A673 (cell line): ENCODE measurements at regions of chr20 and their contacts with region 1.

Region 1: GRCh38 chr20:32902456-32903420 is 44.0 kb downstream of the EFCAB8 start:
- DNase-seq: peak; percentile 61
- H3K4me3 ChIP-seq: no peak overlapping the region
- H3K27ac ChIP-seq: no peak overlapping the region
- H3K4me1 ChIP-seq: no peaks in the 10 kb centered on the region
- H3K27me3 ChIP-seq: no peaks in the 10 kb centered on the region
- CTCF ChIP-seq: peak; percentile 90

Region 2: DNA sequence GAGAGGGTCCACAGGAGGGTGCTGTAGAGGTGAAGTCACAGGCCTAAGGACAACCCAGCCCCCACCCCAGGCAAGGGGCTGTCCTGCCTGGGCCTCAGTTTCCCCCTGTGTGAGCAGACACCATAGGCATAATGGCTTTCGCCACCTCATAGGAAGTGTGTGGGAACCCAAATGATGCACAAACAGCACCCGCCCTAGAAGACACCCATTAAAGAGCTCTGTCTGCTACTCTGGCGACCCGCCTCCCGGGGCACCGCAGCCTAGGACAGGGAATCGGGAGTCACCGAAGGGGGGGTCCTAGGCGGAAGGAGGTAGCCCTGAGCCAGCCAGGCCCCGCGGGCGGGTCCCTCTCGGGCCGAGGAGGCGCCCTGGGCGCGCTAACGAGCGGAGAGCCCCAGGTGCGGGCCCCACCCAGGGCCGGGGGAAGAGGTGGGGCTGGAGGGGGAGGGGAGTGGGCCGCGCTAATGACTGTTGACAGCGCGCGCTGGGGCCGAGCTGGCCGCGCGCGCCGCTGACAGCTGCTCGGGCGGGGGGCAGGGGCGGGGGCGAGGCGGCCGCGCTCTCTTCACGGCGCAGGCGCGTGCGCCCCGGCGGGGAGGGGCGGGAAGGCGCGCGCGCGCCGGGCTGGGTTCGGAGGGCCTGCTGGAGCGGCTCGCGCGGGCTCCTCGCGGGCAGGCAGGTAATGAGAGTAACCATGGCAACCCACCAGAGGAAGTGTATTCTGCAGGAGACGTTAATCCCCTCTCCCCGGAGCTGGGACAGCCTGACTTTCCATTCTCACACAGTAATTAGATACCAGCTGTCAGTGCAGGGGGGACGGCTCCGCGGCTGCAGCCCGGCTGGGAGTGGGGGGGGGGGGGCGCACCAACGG is 366.6 kb before region 1 on chr20:
- CTCF ChIA-PET with region 1: no interaction called
- POLR2A ChIA-PET with region 1: no interaction called
- intact Hi-C with region 1: no loop called
- DNase-seq: peak; percentile 84
- H3K4me3 ChIP-seq: peak overlapping the region; percentile 39
- H3K27ac ChIP-seq: no peak overlapping the region
- H3K4me1 ChIP-seq: peaks cover 11% of the 10 kb centered on the region
- H3K27me3 ChIP-seq: no peaks in the 10 kb centered on the region
- CTCF ChIP-seq: no peak

Region 3: DNA sequence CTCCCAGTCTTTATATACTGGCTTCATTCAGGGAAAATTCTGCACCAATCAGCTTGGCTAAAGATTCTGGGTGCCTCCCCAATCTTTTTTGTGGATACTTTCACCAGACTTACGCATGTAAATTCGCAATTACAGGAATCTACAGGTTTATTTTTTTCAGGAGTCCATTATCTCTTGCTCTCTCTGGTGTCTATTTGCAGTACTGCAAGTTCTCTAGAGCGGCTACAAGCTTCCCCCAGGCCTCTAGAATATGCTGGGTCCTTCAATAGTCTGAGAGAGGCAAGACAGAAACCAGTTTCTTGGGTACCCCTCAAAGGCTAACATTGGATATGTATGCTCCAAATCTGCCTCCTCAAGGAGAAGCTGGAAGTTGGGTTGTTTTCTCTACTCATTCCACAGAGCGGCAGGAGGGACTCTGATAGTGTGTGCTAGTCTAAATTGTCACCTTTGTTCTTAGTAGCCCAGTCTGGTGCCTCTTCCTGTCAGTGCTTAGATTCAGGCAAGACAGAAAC is 43.0 kb after region 1 on chr20:
- CTCF ChIA-PET with region 1: interaction called, 6 read pairs
- POLR2A ChIA-PET with region 1: no interaction called
- intact Hi-C with region 1: loop called (anchors 1 kb)
- DNase-seq: peak; percentile 52
- H3K4me3 ChIP-seq: no peak overlapping the region
- H3K27ac ChIP-seq: no peak overlapping the region
- H3K4me1 ChIP-seq: no peaks in the 10 kb centered on the region
- H3K27me3 ChIP-seq: peaks cover 36% of the 10 kb centered on the region
- CTCF ChIP-seq: peak; percentile 59

Region 4: DNA sequence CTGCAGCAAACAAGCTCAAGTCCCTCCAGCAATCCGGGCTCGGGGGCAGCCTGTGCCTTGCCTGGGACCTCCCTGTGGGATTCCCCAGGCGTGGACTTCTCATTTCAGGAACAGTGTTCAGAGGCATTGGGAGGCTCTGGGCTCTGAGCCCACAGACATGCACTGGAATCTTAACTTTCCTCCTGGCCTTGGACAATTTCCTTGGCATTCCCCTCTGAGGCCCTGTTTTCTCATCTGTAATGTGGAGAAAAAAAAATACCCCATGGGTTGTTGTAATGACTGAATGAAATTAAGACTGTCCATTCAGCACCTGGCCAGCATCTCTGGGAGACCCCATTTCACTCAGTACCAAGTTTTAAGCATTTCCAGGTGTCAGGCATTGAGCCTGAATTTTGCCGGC is 194.3 kb after region 1 on chr20:
- CTCF ChIA-PET with region 1: no interaction called
- POLR2A ChIA-PET with region 1: no interaction called
- intact Hi-C with region 1: loop called (anchors 2 kb)
- DNase-seq: no peak
- H3K4me3 ChIP-seq: no peak overlapping the region
- H3K27ac ChIP-seq: no peak overlapping the region
- H3K4me1 ChIP-seq: no peaks in the 10 kb centered on the region
- H3K27me3 ChIP-seq: peaks cover 9% of the 10 kb centered on the region
- CTCF ChIP-seq: no peak

Region 5: GRCh38 chr20:33211817-33212424 is 309.2 kb after region 1 on chr20:
- CTCF ChIA-PET with region 1: no interaction called
- POLR2A ChIA-PET with region 1: no interaction called
- intact Hi-C with region 1: loop called (anchors 2 kb)
- DNase-seq: peak; percentile 53
- H3K4me3 ChIP-seq: no peak overlapping the region
- H3K27ac ChIP-seq: no peak overlapping the region
- H3K4me1 ChIP-seq: no peaks in the 10 kb centered on the region
- H3K27me3 ChIP-seq: peaks cover 56% of the 10 kb centered on the region
- CTCF ChIP-seq: peak; percentile 51

Region 6: GRCh38 chr20:33299111-33299603 is 396.4 kb after region 1 on chr20:
- CTCF ChIA-PET with region 1: no interaction called
- POLR2A ChIA-PET with region 1: no interaction called
- intact Hi-C with region 1: loop called (anchors 1 kb)
- DNase-seq: peak; percentile 74
- H3K4me3 ChIP-seq: no peak overlapping the region
- H3K27ac ChIP-seq: no peak overlapping the region
- H3K4me1 ChIP-seq: no peaks in the 10 kb centered on the region
- H3K27me3 ChIP-seq: peaks cover 40% of the 10 kb centered on the region
- CTCF ChIP-seq: peak; percentile 95